HepG2 (cell line): ENCODE measurements at regions of chr1 and their contacts with region 1.

Region 1: GRCh38 chr1:165884690-165885304 is 57.4 kb downstream of the UCK2 start:
- DNase-seq: peak; percentile 83
- ATAC-seq: peak; percentile 90
- H3K4me3 ChIP-seq: peak overlapping the region in 2 of 3 experiments; percentile 34; a peak in 2 of 6 replicates
- H3K27ac ChIP-seq: peak overlapping the region; percentile 73
- H3K4me1 ChIP-seq: peaks cover 83% of the 10 kb centered on the region
- H3K27me3 ChIP-seq: no peaks in the 10 kb centered on the region
- CTCF ChIP-seq: 0 out of 2 replicates have a peak, but pooled peaks have one; percentile 7
- EP300 ChIP-seq: peak in 1 of 2 experiments; percentile 52; a peak in 1 of 4 replicates
- POLR2A ChIP-seq: no peak
- RAD21 ChIP-seq: no peak

Region 2: DNA sequence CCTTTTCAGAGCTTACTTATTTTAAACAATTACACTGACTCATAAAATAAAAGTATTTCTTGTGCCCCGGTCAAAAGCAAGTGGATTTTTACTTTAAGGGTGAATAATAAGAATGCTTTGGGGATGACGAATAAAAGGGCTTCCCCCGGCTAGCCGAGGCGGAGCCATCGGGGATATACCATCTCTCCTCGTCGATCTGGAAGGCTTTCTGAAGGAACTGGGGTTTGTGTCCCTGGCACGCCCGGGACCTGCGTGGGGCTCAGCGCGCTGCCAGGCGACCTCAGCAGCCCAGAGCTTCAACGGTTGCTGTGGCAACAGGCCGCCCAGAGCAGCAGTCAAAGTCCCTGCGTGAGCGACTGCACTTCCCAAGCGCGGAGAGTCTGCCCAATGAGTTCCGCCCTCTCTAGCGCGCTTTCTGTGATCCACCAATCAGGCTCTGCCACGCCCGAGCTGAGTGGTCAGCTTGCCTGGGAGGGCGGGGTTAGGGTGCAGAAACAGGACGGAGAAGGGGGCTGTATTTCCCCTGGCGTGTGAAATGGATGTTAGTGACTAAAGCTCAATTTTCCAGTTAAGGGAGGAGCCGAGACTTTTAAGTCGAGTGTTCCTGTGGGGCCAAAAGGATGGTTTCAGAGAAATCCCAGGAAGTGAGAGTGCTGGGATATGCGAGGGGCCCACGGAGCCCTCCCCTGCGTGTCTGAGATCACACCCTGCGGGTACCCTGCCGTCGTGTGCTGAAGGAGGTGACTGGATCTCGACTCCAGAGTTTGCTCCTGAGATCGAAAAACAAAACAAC is 286.7 kb before region 1 on chr1:
- CTCF ChIA-PET with region 1: no interaction called
- POLR2A ChIA-PET with region 1: no interaction called
- in situ Hi-C with region 1: no loop called
- intact Hi-C with region 1: no loop called
- DNase-seq: peak; percentile 90
- ATAC-seq: peak; percentile 99
- H3K4me3 ChIP-seq: peak overlapping the region; percentile 55 to 77 (median 70)
- H3K27ac ChIP-seq: peak overlapping the region; percentile 26
- H3K4me1 ChIP-seq: peaks cover 38% of the 10 kb centered on the region
- H3K27me3 ChIP-seq: no peaks in the 10 kb centered on the region
- CTCF ChIP-seq: no peak
- EP300 ChIP-seq: no peak
- POLR2A ChIP-seq: 0 out of 4 replicates have a peak, but pooled peaks of 1 of the 2 experiments have one; percentile 1
- RAD21 ChIP-seq: no peak

Region 3: GRCh38 chr1:165898837-165899236 is 14.0 kb after region 1 on chr1:
- CTCF ChIA-PET with region 1: no interaction called
- POLR2A ChIA-PET with region 1: interaction called, 9 read pairs
- in situ Hi-C with region 1: no loop called
- intact Hi-C with region 1: loop called (anchors 2 kb)
- DNase-seq: no peak
- ATAC-seq: no peak
- H3K4me3 ChIP-seq: no peak overlapping the region
- H3K27ac ChIP-seq: no peak overlapping the region
- H3K4me1 ChIP-seq: peaks cover 50% of the 10 kb centered on the region
- H3K27me3 ChIP-seq: no peaks in the 10 kb centered on the region
- CTCF ChIP-seq: no peak
- EP300 ChIP-seq: no peak
- POLR2A ChIP-seq: no peak
- RAD21 ChIP-seq: no peak